H1 (cell line): ENCODE measurements at regions of chr11 and their contacts with region 1.

Region 1: GRCh38 chr11:77568916-77569675 is 20.7 kb upstream of the AQP11 start:
- DNase-seq: no peak
- H3K4me3 ChIP-seq: no peak overlapping the region
- H3K27ac ChIP-seq: no peak overlapping the region
- H3K4me1 ChIP-seq: peaks cover 0 to 25% (median 4%) of the 10 kb centered on the region in 4 experiments; a peak in 3 of 7 replicates
- H3K27me3 ChIP-seq: no peaks in the 10 kb centered on the region; a peak in 1 of 7 replicates
- CTCF ChIP-seq: no peak
- EP300 ChIP-seq: no peak
- POLR2A ChIP-seq: no peak
- RAD21 ChIP-seq: no peak

Region 2: DNA sequence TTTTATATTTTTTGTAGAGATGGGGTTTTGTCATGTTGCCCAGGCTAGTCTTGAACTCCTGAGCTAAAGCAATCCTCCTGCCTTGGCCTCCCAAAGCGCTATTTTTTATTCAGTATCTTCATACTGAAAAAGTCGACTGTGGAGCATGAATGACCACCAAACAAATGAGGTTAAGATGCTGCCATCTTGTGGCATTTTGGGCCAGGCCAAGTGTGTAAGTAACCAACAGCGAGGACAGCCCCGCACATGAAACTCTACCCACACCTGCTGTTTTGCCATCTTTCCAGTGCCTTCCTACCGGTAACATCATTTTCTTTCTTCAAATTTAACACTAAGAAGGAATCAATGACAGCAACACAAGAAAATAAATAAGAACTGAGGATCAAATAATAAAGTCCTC is 11.5 kb before region 1 on chr11:
- CTCF ChIA-PET with region 1: interaction called, 12 read pairs
- POLR2A ChIA-PET with region 1: interaction called, 4 read pairs
- DNase-seq: peak in 1 of 2 experiments; percentile 19
- H3K4me3 ChIP-seq: no peak overlapping the region
- H3K27ac ChIP-seq: no peak overlapping the region
- H3K4me1 ChIP-seq: no peaks in the 10 kb centered on the region
- H3K27me3 ChIP-seq: no peaks in the 10 kb centered on the region
- CTCF ChIP-seq: peak; percentile 56 to 73 (median 63)
- EP300 ChIP-seq: no peak
- POLR2A ChIP-seq: no peak
- RAD21 ChIP-seq: peak; percentile 82 to 85

Region 3: DNA sequence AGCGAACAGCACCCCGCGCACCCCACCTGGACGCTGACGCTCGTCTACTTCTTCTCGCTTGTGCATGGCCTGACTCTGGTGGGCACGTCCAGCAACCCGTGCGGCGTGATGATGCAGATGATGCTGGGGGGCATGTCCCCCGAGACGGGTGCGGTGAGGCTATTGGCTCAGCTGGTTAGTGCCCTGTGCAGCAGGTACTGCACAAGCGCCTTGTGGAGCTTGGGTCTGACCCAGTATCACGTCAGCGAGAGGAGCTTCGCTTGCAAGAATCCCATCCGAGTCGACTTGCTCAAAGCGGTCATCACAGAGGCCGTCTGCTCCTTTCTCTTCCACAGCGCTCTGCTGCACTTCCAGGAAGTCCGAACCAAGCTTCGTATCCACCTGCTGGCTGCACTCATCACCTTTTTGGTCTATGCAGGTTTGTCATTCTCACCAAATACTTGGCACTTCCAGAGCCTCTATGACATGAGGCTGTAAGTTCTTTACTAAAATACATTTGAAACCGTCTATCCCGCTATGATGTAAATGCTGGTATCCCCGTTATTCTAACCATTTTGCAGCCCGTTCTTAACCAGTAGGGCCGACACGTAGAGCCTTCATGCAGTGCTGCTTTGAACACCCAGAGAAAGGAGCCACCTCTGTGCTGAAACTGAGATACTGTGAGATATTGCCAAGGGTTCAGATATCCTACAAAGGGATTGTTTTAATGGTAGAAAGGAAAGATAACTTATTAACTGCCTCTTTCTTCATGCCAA is 21.3 kb after region 1 on chr11:
- CTCF ChIA-PET with region 1: no interaction called
- POLR2A ChIA-PET with region 1: no interaction called
- DNase-seq: no peak
- H3K4me3 ChIP-seq: peak overlapping the region; percentile 56 to 66 (median 60)
- H3K27ac ChIP-seq: no peak overlapping the region
- H3K4me1 ChIP-seq: peaks cover 0 to 10% (median 5%) of the 10 kb centered on the region in 4 experiments; a peak in 5 of 7 replicates
- H3K27me3 ChIP-seq: peaks cover 0 to 5% (median 4%) of the 10 kb centered on the region in 4 experiments; a peak in 3 of 7 replicates
- CTCF ChIP-seq: peak in 2 of 3 experiments; percentile 26; a peak in 3 of 4 replicates
- EP300 ChIP-seq: no peak
- POLR2A ChIP-seq: no peak
- RAD21 ChIP-seq: peak; percentile 34 to 42